ENCODE measurements at regions of chr20 and their contacts with region 1.

Region 1: GRCh38 chr20:23441850-23442313 is 2.4 kb downstream of the CSTL1 start:
- DNase-seq: peak; percentile 80
- CTCF ChIP-seq: peak; percentile 79

Region 2: GRCh38 chr20:23350196-23350903 is 91.5 kb before region 1 on chr20 and contains the start of gene NXT1:
- CTCF ChIA-PET with region 1: interaction called, 11 read pairs
- POLR2A ChIA-PET with region 1: no interaction called
- DNase-seq: peak; percentile 92
- CTCF ChIP-seq: peak; percentile 15

Region 3: DNA sequence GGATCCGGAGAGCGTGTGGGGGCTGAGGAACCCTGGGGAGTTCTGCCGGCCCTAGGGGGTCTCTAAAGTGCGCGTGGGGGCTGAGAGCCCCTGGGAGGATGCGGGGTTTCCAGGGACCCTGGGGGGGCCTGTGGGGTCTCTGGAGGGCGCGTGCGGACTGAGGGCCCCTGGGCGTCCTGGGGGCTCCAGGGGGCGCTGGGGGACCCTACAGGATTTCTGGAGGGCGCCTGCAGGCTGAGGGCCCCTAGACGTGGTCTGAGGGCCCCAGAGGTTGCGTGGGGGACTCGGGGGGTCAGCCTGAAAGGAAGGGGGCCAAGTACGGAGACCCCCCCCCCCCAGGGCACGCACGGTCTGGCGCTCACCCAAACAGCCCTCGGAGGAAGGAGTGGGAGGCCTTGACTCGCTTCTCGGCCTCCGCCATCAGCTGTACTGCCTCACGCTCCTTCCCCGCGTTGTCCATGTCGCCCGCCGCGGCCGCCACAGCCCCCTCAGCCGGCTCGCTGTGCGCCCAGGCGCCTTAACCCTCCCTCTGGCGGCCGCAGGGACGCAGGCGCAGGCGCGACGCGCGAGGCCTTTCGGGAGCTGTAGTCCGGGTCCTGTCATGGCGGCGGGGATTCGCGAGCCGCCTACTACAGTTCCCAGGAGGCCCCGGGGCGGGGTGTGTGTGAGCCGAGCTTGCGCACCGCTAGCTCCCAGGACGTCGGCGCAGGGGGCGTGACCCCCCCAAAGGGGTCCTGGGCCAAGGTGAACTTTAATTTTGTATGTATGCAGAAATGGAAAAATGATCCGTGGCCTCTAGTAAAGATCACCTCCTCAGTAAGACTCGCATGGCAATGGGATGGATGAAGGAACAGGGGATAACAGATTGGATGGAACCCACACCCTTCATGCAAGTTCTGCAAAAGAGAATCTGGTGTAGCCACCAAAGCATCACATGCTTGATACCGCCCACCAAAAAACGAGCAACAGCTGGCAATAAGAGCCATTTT is 20.6 kb before region 1 on chr20 and contains the start of gene NAPB:
- CTCF ChIA-PET with region 1: interaction called, 17 read pairs
- POLR2A ChIA-PET with region 1: no interaction called
- DNase-seq: peak; percentile 96
- CTCF ChIP-seq: peak; percentile 22

Region 4: GRCh38 chr20:23451956-23452487 is 10.1 kb after region 1 on chr20:
- CTCF ChIA-PET with region 1: interaction called, 22 read pairs
- POLR2A ChIA-PET with region 1: no interaction called
- DNase-seq: no peak
- CTCF ChIP-seq: no peak

Region 5: DNA sequence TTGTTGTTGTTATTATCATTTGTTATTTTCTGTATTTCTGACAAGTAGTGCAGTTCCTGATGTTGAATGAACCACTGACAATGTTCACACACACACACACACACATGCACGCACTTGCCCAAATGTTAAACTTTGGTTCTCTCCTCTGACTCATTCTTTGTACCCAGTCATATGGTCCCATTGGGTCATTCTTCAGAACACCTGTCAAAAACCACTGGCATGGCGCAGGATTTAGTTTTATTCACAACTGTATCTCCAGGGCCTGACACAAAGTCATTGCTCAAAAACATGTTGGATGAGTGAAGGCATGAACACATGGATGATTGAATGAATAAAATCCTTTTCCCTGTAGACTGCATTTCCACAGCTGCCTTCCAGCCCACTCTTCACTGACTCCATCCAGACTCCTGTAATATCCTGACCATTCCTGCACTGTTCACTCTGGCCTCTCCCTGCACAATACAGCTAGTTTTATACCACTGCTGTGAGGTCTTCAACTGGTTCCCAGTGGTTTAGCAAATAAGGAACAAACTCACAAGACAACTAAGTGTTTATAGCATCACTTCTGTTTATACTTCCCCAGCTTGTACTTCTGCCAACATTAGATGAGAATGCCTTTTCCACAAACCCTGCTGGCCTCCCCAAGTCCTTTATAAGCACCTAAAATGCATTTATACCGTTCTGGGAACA is 17.7 kb after region 1 on chr20:
- CTCF ChIA-PET with region 1: interaction called, 10 read pairs
- POLR2A ChIA-PET with region 1: no interaction called
- DNase-seq: no peak
- CTCF ChIP-seq: no peak

Region 6: GRCh38 chr20:23606652-23607049 is 164.8 kb after region 1 on chr20:
- CTCF ChIA-PET with region 1: interaction called, 90 read pairs
- POLR2A ChIA-PET with region 1: no interaction called
- DNase-seq: peak; percentile 86
- CTCF ChIP-seq: peak; percentile 95

Measured in GM10248 (cell line).